H1 (cell line): ENCODE measurements at regions of chr7 and their contacts with region 1.

Region 1: DNA sequence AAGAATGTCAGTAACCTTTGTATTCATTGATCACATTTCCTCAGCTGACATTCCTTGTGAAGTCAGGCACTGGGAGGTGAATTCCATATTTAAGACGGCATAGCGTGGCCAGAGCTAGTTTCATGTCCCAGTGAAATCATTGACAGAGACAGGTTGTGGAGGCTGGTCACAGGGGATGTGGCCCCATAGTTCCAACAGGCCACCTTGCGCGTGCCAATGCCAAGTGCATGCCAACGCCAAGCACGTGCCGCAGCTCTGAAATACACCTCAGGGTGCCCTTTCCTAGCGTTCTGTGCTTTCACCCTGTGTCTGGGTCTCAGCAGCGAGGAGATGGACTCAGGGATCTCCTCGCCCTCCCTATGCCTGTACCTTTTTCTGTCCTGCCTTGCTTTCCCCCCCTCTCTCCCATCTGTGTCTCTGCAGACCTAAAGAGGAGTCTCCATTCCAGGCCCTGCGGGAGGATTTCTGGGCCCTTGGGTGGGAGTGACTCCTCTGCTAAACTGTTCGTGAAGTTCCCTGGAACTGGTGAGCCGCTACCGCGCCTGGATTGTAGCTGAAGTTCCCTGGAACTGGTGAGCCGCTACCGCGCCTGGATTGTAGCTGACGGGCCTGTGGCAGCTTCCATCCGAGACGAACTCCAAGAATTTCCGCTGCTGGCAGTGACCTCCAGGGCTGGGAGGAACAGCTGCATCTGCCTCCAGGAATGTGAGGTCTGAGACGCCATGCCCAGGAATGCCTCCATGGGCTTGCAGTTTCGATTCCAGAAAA is 19.7 kb downstream of the AQP1 start:
- DNase-seq: peak in 1 of 2 experiments; percentile 37
- H3K4me3 ChIP-seq: no peak overlapping the region
- H3K27ac ChIP-seq: no peak overlapping the region
- H3K4me1 ChIP-seq: peaks cover 0 to 9% (median 6%) of the 10 kb centered on the region in 4 experiments; a peak in 6 of 7 replicates
- H3K27me3 ChIP-seq: 0 out of 7 replicates have a peak, but pooled peaks cover 0 to 8% (median 0%) of the 10 kb centered on the region in 4 experiments
- CTCF ChIP-seq: no peak
- EP300 ChIP-seq: no peak
- POLR2A ChIP-seq: no peak
- RAD21 ChIP-seq: no peak; a peak in 1 of 4 replicates

Region 2: GRCh38 chr7:30920584-30921539 is 10.5 kb before region 1 on chr7:
- CTCF ChIA-PET with region 1: interaction called, 55 read pairs
- POLR2A ChIA-PET with region 1: interaction called, 3 read pairs
- DNase-seq: peak in 1 of 2 experiments; percentile 37
- H3K4me3 ChIP-seq: no peak overlapping the region
- H3K27ac ChIP-seq: no peak overlapping the region
- H3K4me1 ChIP-seq: peaks cover 0 to 3% (median 0%) of the 10 kb centered on the region in 4 experiments; a peak in 1 of 7 replicates
- H3K27me3 ChIP-seq: no peaks in the 10 kb centered on the region; a peak in 1 of 7 replicates
- CTCF ChIP-seq: no peak
- EP300 ChIP-seq: no peak
- POLR2A ChIP-seq: no peak
- RAD21 ChIP-seq: no peak

Region 3: DNA sequence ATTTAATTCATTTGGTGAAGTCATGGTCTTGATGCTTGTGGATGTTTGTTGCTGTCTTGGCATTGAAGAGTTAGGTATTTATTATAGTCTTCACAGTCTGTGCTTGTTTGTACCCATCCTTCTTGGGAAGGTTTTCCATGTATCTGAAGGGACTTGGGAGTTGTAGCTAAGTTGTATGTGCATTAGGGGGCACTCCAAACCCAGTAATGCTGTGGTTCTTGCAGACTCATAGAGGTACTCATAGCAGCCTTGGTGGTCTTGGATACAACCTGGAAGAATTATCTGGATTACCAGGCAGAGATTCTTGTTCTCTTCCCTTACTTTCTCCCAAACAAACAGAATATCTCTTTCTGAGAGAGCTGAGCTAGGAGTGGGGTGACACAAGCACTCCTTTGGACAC is 214.0 kb after region 1 on chr7:
- CTCF ChIA-PET with region 1: no interaction called
- POLR2A ChIA-PET with region 1: no interaction called
- DNase-seq: no peak
- H3K4me3 ChIP-seq: no peak overlapping the region
- H3K27ac ChIP-seq: no peak overlapping the region
- H3K4me1 ChIP-seq: no peaks in the 10 kb centered on the region
- H3K27me3 ChIP-seq: no peaks in the 10 kb centered on the region
- CTCF ChIP-seq: peak in 2 of 3 experiments; percentile 39 to 46; a peak in 3 of 4 replicates
- EP300 ChIP-seq: no peak
- POLR2A ChIP-seq: no peak
- RAD21 ChIP-seq: peak; percentile 68 to 73